PC-3 (cell line): ENCODE measurements at regions of chr1 and their contacts with region 1.

Region 1: DNA sequence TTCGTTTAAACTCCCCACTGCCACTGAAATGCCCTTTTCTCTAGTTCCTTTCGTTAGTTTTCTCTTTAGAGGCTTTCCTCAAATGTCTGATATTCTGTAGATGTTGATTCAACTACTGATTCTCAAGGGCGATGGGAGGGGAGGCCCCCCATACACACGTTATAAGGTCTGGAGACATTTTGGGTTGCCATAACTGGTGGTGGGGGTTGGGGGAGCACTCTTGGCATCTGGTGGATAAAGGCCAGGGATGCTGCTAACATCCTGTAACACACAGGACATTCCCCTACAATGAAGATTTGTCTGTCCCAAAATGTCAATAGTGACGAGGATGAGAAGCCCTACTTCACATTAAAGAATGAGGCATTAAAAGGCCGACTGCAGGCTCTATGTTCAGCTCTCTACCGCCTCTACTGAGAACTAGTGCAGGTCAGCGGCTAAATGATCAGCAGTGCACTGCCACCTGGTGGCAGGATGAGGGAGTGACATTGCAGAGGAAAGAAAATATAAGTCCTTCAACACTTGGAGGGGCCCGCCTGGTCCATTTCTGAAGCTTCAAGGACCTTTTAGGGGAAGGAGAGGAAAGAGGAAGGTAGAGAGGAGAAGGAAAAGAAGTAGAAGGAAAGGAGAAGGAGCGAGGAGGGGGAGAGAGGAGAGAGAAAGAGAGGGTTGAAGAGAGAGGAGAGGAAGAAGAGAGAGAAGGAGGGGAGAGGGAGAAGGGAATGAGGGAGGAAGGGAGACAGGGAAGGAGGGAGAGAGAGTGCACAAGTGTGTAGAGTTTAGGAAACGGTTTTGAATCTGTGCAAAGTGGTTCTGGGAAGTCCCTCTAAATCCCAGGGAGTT is 29.4 kb downstream of the ALG14 start:
- DNase-seq: peak; percentile 93
- ATAC-seq: peak; percentile 62
- H3K4me3 ChIP-seq: no peak overlapping the region
- H3K27ac ChIP-seq: no peak overlapping the region
- H3K4me1 ChIP-seq: peaks cover 34% of the 10 kb centered on the region
- H3K27me3 ChIP-seq: no peaks in the 10 kb centered on the region
- CTCF ChIP-seq: peak; percentile 99

Region 2: DNA sequence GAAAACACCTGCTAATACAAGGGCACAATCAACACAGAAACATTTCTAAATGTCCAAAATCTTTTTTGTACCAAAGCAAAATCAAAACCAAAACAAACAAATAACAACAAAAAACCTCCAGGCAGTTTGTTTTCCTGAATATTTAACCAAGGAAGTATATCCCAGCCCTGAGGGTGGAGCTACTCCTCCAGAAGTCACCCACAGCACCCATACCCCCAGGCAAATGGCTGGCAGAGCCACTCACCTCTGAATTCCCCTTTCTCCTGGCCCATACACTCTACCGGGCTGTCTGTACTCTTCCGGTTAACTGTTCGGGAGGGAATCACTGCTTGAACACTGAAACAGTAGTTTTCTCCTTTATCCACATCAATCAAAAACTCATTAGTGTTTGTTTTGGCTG is 511.3 kb before region 1 on chr1:
- CTCF ChIA-PET with region 1: no interaction called
- POLR2A ChIA-PET with region 1: no interaction called
- intact Hi-C with region 1: loop called (anchors 10 kb)
- DNase-seq: peak; percentile 67
- ATAC-seq: peak; percentile 93
- H3K4me3 ChIP-seq: no peak overlapping the region
- H3K27ac ChIP-seq: no peak overlapping the region
- H3K4me1 ChIP-seq: peaks cover 15% of the 10 kb centered on the region; the same call in 1 of the 2 replicates
- H3K27me3 ChIP-seq: no peaks in the 10 kb centered on the region
- CTCF ChIP-seq: peak; percentile 62

Region 3: DNA sequence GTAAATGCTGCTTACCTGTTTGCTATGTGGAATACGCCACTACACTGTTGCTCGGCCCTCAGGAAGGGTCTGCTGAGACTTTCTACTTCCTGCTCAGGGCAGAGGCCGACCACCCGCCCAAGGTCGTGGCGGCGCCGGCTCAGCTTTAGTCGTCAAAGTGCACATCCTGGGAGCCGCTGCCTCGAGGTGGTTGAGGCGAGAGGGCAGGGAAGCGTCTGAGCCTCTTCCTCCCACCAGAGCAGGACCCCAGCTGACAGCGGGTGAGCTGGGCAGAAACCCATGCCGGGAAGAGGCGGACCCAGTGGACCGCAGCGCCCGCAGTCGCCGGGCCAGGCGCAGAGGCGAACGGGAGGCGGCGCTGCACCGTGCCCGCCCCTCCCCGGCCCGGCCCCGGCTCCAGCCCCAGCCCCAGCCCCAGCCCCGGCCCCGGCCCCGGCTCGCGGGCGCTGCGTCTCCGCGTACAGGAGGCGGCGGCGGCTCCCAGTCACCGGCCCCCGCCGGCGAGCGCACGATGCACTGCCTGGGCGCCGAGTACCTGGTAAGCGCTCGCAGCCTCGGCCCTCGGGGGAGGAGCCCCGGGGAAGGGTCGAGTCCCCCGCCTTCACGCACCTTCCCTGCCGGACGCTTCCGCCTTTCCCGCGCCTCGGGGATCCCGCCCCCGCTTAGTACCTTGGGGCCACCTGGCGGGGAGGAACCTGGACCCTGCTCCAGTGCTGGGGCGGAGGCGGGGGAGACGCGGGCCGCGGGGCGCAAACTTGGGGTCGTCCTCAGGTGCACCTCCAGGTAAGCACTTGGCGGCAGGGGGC is 223.2 kb before region 1 on chr1 and contains the start of gene SLC44A3:
- CTCF ChIA-PET with region 1: interaction called, 3 read pairs
- POLR2A ChIA-PET with region 1: no interaction called
- intact Hi-C with region 1: loop called (anchors 1 kb)
- DNase-seq: peak; percentile 60
- ATAC-seq: peak; percentile 83
- H3K4me3 ChIP-seq: peak within 1 kb of the TSS; percentile 75
- H3K27ac ChIP-seq: peak within 1 kb of the TSS; percentile 25; the same call in 1 of the 2 replicates
- H3K4me1 ChIP-seq: peaks cover 37% of the 10 kb centered on the region
- H3K27me3 ChIP-seq: no peaks in the 10 kb centered on the region
- CTCF ChIP-seq: no peak
- total RNA-seq, gene SLC44A3: 6.3 and 9.2 TPM in 2 replicates

Region 4: DNA sequence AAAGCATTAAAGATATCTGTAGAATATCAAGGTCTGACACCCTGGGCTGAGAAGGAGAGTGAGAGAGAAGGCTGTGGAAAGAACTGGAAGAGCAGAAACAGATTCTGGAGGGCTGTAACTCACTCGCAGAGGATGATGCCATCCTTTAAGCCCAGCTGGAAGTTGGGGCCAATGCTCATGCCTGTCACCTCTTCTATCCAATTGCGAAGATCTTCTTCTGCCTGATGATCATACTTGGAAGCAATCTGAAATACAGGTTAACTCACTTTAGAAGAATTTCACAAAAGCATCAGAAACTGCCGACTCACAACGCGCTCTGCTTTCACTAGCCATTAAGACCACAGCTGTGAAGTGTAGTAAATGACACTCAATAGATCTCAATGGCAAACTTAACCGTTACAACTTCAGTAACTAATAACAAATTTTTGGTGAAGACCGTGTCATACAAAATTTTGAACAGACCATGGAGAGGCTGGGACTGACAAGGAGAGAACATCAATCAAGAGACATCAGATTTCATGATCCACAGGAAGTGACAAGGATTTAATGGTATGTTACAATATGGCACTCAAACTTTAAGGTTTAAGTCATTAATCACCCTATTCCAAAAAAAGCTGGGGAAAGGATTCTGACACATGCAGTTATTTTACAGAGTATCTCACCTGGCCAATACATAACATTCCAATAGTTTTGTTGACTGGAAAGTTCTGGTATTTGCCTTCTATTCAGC is 139.9 kb before region 1 on chr1:
- CTCF ChIA-PET with region 1: interaction called, 3 read pairs
- POLR2A ChIA-PET with region 1: no interaction called
- intact Hi-C with region 1: loop called (anchors 2 kb)
- DNase-seq: peak; percentile 43
- ATAC-seq: peak; percentile 22
- H3K4me3 ChIP-seq: no peak overlapping the region
- H3K27ac ChIP-seq: no peak overlapping the region
- H3K4me1 ChIP-seq: peaks cover 21% of the 10 kb centered on the region
- H3K27me3 ChIP-seq: no peaks in the 10 kb centered on the region
- CTCF ChIP-seq: no peak

Region 5: GRCh38 chr1:94983171-94983739 is 60.1 kb before region 1 on chr1:
- CTCF ChIA-PET with region 1: no interaction called
- POLR2A ChIA-PET with region 1: no interaction called
- intact Hi-C with region 1: loop called (anchors 5 kb)
- DNase-seq: peak; percentile 86
- ATAC-seq: peak; percentile 99
- H3K4me3 ChIP-seq: no peak overlapping the region
- H3K27ac ChIP-seq: peak overlapping the region; percentile 8; the same call in 1 of the 2 replicates
- H3K4me1 ChIP-seq: peaks cover 19% of the 10 kb centered on the region
- H3K27me3 ChIP-seq: no peaks in the 10 kb centered on the region
- CTCF ChIP-seq: no peak

Region 6: DNA sequence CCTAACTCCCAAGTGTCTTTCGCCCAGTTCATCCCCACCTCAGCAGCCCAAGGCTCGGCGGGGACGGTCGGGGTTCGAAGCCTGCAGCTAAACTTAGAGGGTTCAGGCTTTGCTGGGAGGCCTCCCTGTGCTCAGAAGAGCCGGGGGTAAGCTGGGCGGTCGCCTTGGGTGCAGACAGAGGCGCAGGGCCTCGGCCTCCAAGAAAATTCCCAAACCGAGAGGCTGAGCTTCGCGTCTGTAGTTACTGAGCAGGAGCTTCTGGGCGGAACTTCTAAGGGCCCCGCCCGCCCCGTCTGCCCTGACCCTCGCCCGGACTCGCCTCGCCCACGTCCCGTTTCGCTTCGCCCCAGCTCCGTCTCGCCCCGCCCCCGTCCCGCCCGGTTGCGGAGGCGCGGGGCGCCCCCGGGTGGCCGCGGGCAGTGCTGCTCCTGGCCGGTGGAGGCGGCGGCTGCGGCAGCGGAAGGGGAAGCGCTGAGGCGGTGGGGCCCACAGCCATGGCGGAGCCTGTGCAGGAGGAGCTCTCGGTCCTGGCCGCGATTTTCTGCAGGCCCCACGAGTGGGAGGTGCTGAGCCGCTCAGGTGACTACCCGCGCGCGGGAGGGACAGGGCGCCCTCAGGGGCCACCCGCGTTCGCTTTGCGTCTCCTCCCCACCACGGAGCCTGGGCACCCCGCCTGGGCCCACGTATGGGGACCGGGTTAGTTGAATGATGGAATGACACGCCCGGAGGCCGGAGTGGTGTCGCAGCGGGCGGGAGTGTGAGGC is 190.6 kb after region 1 on chr1 and contains the start of gene RWDD3:
- CTCF ChIA-PET with region 1: interaction called, 11 read pairs
- POLR2A ChIA-PET with region 1: interaction called, 4 read pairs
- intact Hi-C with region 1: loop called (anchors 2 kb)
- DNase-seq: peak; percentile 95
- ATAC-seq: peak; percentile 92
- H3K4me3 ChIP-seq: peak within 1 kb of the TSS; percentile 94
- H3K27ac ChIP-seq: peak within 1 kb of the TSS; percentile 21; the same call in 1 of the 2 replicates
- H3K4me1 ChIP-seq: peaks cover 28% of the 10 kb centered on the region
- H3K27me3 ChIP-seq: no peaks in the 10 kb centered on the region
- CTCF ChIP-seq: peak; percentile 75
- total RNA-seq, gene RWDD3: 10.3 and 10.4 TPM in 2 replicates

Region 7: GRCh38 chr1:95578462-95578861 is 535.1 kb after region 1 on chr1:
- CTCF ChIA-PET with region 1: no interaction called
- POLR2A ChIA-PET with region 1: no interaction called
- intact Hi-C with region 1: no loop called
- DNase-seq: no peak
- ATAC-seq: no peak
- H3K4me3 ChIP-seq: no peak overlapping the region
- H3K27ac ChIP-seq: no peak overlapping the region
- H3K4me1 ChIP-seq: no peaks in the 10 kb centered on the region
- H3K27me3 ChIP-seq: peaks cover 48% of the 10 kb centered on the region
- CTCF ChIP-seq: no peak

Region 8: GRCh38 chr1:96049759-96050409 is 1006.5 kb after region 1 on chr1:
- CTCF ChIA-PET with region 1: no interaction called
- POLR2A ChIA-PET with region 1: no interaction called
- intact Hi-C with region 1: no loop called
- DNase-seq: no peak
- ATAC-seq: no peak
- H3K4me3 ChIP-seq: no peak overlapping the region
- H3K27ac ChIP-seq: no peak overlapping the region
- H3K4me1 ChIP-seq: no peaks in the 10 kb centered on the region
- H3K27me3 ChIP-seq: no peaks in the 10 kb centered on the region
- CTCF ChIP-seq: no peak